Common myeloid progenitor, CD34-positive (primary cell): ENCODE measurements at regions of chr19 and their contacts with region 1.

Region 1: GRCh38 chr19:56314562-56315077 is at the start of gene ZSCAN5A:
- DNase-seq: peak; percentile 97
- H3K4me3 ChIP-seq: peak within 1 kb of the TSS; percentile 41 to 95 (median 90)
- H3K27ac ChIP-seq: peak within 1 kb of the TSS; percentile 98 to 99
- H3K4me1 ChIP-seq: peaks cover 12 to 43% (median 32%) of the 10 kb centered on the region in 4 experiments
- H3K27me3 ChIP-seq: no peaks in the 10 kb centered on the region

Region 2: DNA sequence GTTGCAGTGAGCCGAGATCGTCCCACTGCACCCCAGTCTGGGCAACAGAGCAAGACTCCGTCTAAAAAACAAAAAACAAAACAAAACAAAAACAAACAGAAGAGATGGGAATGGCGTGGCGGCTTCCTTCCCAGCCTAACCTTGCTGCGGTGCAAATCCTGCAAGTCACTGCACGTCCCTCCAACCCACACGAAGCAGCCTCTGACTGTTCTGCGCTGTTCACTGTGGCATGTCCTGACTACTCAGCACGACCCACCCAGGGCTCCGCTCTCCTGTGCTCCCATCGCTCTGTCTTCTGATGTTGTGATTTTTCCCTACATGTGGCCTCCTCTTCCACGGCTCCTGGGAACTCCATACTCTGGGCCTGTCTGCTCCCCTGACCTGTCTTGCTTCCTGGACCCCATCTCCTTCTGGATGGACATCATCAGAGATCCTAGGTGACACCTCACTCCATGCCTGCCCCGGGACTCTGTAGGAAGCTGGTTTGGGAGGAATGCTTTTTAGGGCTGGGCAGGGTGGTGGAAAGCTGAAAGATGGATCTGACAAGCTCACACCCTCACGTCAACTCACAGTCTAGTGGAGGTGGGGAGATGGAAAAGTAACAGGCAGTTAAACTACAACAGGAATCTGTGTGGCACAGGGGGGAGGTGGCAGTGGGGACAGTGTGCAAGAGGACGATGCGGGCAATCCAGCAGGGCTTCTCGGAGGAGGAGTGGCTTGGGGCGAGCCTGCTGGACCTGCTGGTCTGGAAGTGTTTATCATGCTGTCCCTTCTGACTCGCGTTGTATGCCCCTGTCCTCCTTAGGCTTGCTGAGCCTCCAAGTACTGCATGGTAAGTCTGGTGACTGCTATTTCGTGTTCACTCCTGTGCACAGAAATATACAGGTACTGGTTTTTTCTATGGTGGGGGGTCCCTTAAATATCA is 18.8 kb before region 1 on chr19:
- CTCF ChIA-PET with region 1: interaction called, 13 read pairs
- POLR2A ChIA-PET with region 1: no interaction called
- DNase-seq: no peak
- H3K4me3 ChIP-seq: no peak overlapping the region
- H3K27ac ChIP-seq: no peak overlapping the region
- H3K4me1 ChIP-seq: no peaks in the 10 kb centered on the region
- H3K27me3 ChIP-seq: no peaks in the 10 kb centered on the region